ENCODE measurements at regions of chr13 and their contacts with region 1.

Region 1: GRCh38 chr13:48580185-48580803 is 47.4 kb upstream of the RCBTB2 start:
- DNase-seq: no peak
- H3K4me3 ChIP-seq: no peak overlapping the region
- H3K27ac ChIP-seq: peak overlapping the region; percentile 83 to 91 (median 88)
- H3K4me1 ChIP-seq: peaks cover 29 to 79% (median 31%) of the 10 kb centered on the region in 3 donors
- H3K27me3 ChIP-seq: no peaks in the 10 kb centered on the region
- CTCF ChIP-seq: peak; percentile 47 to 85 (median 79)
- POLR2A ChIP-seq: no peak

Region 2: DNA sequence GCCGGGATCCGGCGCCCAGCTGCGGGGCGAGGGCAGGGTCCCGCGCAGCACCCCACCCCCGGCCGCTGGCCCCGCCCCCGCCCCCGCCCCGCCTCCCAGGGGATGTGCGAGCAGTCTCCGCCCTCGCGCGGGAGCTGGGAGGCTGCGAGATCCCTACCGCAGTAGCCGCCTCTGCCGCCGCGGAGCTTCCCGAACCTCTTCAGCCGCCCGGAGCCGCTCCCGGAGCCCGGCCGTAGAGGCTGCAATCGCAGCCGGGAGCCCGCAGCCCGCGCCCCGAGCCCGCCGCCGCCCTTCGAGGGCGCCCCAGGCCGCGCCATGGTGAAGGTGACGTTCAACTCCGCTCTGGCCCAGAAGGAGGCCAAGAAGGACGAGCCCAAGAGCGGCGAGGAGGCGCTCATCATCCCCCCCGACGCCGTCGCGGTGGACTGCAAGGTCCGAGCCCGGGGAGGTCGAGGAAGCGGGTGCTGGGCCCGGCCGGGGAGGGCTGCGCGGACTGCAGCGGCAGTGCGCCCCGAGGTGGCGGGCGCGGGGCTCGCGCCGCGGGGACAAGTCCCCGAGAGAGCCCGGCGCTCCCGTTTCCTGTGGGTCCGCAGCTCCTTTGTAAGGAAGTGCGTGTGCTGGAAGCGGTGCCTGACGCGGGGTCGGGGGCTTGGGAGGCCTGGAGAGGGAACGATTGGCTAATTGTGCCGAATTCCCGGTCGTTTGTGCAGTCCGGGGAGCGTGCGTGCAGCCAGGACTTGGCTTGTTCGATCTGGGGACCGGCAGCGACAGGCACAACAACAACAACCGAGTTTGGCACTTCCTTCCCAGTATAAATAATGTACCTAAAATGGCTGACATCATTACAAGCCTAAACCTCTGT is 347.0 kb before region 1 on chr13 and contains the start of gene ITM2B:
- intact Hi-C with region 1: loop called (anchors 10 kb)
- DNase-seq: peak; percentile 15
- H3K4me3 ChIP-seq: peak within 1 kb of the TSS; percentile 59 to 99 (median 87)
- H3K27ac ChIP-seq: peak within 1 kb of the TSS; percentile 89 to 100 (median 99)
- H3K4me1 ChIP-seq: peaks cover 29 to 57% (median 37%) of the 10 kb centered on the region in 3 donors
- H3K27me3 ChIP-seq: no peaks in the 10 kb centered on the region
- CTCF ChIP-seq: peak in 5 of 6 experiments; percentile 10 to 46 (median 44)
- POLR2A ChIP-seq: peak in 2 of 4 donors; percentile 87 to 95
- total RNA-seq, gene ITM2B: 418 to 554 (median 457) TPM

Region 3: DNA sequence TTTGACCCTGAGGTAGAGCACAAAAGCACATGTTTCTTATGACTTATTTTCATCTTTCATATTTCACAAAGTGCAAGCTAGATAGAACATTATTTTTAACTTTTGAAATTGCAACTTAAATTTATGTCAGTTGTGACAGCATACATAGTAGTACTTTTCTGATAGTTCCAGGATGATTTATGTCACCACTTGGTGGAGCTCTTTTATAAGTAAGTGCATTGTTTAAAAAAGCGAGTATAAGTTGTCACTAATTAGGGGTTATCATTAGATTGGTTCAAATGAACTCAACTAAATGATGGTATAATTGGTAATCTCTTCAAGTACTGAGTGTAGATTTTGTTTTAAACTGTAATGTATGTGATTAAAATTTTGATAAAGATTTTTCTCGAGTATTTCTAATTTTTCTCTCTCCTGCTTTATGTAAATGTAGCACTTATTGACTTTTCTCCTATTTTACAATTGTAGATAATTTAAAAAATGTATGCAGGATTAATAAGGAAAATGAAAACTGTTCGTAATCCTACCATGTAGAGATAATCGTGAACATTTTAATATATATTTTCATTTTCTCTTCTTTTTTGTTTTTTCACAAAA is 245.7 kb before region 1 on chr13:
- intact Hi-C with region 1: loop called (anchors 10 kb)
- DNase-seq: no peak
- H3K4me3 ChIP-seq: no peak overlapping the region
- H3K27ac ChIP-seq: peak overlapping the region; percentile 41 to 79 (median 60)
- H3K4me1 ChIP-seq: peaks cover 0 to 22% (median 0%) of the 10 kb centered on the region in 3 donors
- H3K27me3 ChIP-seq: no peaks in the 10 kb centered on the region
- CTCF ChIP-seq: peak in 5 of 6 experiments; percentile 58 to 76 (median 67)
- POLR2A ChIP-seq: no peak

Region 4: GRCh38 chr13:48400850-48401291 is 179.4 kb before region 1 on chr13:
- intact Hi-C with region 1: loop called (anchors 10 kb)
- DNase-seq: no peak
- H3K4me3 ChIP-seq: no peak overlapping the region
- H3K27ac ChIP-seq: peak overlapping the region; percentile 75 to 95 (median 83)
- H3K4me1 ChIP-seq: peaks cover 10 to 82% (median 46%) of the 10 kb centered on the region in 3 donors
- H3K27me3 ChIP-seq: no peaks in the 10 kb centered on the region
- CTCF ChIP-seq: peak in 1 of 6 experiments; percentile 4
- POLR2A ChIP-seq: peak in 1 of 4 donors; percentile 11

Region 5: GRCh38 chr13:48505597-48506091 is 74.7 kb before region 1 on chr13:
- intact Hi-C with region 1: loop called (anchors 10 kb)
- DNase-seq: no peak
- H3K4me3 ChIP-seq: peak overlapping the region in 1 of 4 donors; percentile 12
- H3K27ac ChIP-seq: peak overlapping the region; percentile 88 to 92 (median 90)
- H3K4me1 ChIP-seq: peaks cover 35 to 89% (median 62%) of the 10 kb centered on the region in 3 donors
- H3K27me3 ChIP-seq: no peaks in the 10 kb centered on the region
- CTCF ChIP-seq: no peak
- POLR2A ChIP-seq: no peak

Measured in esophagus squamous epithelium (tissue), 5 donors.